ENCODE measurements at regions of chr5 and their contacts with region 1.

Region 1: GRCh38 chr5:77513321-77513720 is 21.2 kb upstream of the WDR41 start:
- DNase-seq: no peak
- H3K4me3 ChIP-seq: no peak overlapping the region
- H3K27me3 ChIP-seq: no peaks in the 10 kb centered on the region; the same call in 1 of the 2 replicates
- CTCF ChIP-seq: no peak

Region 2: DNA sequence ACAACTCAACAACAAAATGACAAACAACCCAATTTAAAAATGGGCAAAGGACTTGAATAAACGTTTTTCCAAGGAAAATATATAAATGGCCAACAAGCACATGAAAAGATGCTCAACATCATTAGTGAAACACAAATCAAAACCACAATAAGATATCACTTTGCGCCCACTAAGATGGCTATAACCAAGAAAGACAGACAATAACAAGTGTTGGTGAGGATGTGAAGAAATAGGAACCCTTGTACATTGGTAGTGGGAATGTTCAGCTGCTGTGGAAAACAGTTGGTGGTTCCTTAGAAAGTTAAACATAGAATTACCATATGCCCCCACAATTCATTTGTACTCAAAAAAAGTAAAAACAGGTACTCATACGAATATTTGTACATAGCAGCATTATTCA is 18.0 kb after region 1 on chr5:
- CTCF ChIA-PET with region 1: no interaction called
- POLR2A ChIA-PET with region 1: no interaction called
- DNase-seq: no peak
- H3K4me3 ChIP-seq: no peak overlapping the region
- H3K27me3 ChIP-seq: peaks cover 7% of the 10 kb centered on the region; the same call in 1 of the 2 replicates
- CTCF ChIP-seq: no peak

Region 3: DNA sequence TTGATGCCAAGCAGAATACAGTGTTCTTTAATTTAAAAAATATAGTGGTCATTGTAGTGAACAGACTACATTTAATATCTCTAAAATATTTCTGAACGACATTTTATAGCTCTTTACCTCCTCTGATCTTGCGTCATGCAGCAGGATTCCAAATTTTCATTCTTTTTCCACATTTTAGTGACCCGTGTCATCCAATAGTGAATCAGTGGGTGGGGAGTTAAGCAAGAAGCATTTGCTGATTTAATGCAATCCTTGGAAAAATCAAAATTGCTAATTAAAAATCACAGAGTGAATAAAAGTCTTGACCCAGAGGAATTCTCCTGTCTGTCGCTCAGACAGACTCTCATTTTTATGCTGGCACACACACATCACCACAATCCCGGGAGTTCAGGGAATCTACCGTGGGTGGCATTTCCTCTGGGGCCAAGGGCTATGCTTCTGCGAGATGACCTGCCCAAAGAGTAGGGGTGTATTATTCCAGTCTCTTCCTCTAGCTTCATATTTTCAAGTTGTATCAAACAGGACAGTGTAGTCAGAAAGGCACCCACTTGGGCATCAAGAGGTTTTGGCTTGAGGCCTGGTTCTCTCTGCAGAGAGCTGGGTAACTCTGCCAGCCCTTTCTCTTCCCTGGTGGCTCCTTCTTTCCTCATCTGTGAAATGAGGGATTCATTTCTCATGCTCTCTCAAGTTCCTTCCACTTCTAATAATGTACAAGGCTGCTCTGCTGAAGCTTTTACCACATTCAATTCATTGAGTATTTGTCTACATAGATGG is 150.0 kb after region 1 on chr5:
- CTCF ChIA-PET with region 1: no interaction called
- POLR2A ChIA-PET with region 1: no interaction called
- DNase-seq: no peak
- H3K4me3 ChIP-seq: no peak overlapping the region
- H3K27me3 ChIP-seq: peaks cover under 1% of the 10 kb centered on the region
- CTCF ChIP-seq: no peak

Region 4: DNA sequence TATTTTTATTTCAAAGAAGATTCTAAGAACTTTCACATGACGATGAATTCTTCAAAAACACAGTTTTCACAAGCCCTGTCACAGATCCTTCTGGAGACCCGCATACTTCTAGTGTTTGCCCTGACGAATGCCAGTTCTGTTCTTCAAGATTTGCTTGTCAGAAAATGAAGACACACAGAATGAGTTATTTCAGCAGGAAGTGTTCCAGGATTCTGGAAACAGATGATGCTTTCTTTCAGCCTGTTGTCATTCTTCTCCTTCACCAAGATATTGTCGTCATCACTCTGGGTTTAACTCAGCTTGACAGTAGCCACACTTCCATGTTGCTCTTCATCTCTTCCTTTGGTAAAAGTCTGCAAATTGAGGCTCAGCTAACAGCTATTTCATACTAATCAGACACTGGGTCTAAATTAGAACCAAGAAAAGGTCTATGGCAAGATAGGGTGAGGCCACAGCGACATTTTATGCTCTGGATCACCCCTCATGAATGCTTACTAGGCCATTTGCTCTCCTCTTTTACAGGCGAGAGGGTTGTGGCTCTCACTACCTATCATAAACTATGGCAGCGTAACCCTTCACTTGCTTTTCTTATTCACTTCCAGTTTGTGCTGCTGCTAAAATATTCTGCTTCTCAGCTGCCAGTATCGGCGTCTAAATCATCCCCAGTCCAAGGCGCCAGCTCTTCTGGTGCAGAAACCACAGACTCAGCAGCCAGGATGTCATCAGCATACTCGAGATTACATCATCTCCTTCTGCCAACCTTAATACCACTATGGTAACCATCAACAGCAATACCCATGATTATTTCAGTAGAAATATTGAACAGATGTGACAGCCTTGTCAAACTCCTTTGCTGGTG is 422.4 kb after region 1 on chr5:
- CTCF ChIA-PET with region 1: no interaction called
- POLR2A ChIA-PET with region 1: interaction called, 19 read pairs
- DNase-seq: no peak
- H3K4me3 ChIP-seq: no peak overlapping the region
- H3K27me3 ChIP-seq: peaks cover 8% of the 10 kb centered on the region
- CTCF ChIP-seq: no peak